Activated T-helper 1 cell treated with anti-CD3 and anti-CD28 coated beads, Interleukin-12 subunit alpha, Interleukin-12 subunit beta, Interleukin-2, Interleukin-4 antibody, amounts not matched to agents 30 ng/mL and 10 ng/mL and 1 ng/mL, durations not matched to agents 14 hours and 24 hours and 36 hours (primary cell): ENCODE measurements at regions of chr12 and their contacts with region 1.

Region 1: DNA sequence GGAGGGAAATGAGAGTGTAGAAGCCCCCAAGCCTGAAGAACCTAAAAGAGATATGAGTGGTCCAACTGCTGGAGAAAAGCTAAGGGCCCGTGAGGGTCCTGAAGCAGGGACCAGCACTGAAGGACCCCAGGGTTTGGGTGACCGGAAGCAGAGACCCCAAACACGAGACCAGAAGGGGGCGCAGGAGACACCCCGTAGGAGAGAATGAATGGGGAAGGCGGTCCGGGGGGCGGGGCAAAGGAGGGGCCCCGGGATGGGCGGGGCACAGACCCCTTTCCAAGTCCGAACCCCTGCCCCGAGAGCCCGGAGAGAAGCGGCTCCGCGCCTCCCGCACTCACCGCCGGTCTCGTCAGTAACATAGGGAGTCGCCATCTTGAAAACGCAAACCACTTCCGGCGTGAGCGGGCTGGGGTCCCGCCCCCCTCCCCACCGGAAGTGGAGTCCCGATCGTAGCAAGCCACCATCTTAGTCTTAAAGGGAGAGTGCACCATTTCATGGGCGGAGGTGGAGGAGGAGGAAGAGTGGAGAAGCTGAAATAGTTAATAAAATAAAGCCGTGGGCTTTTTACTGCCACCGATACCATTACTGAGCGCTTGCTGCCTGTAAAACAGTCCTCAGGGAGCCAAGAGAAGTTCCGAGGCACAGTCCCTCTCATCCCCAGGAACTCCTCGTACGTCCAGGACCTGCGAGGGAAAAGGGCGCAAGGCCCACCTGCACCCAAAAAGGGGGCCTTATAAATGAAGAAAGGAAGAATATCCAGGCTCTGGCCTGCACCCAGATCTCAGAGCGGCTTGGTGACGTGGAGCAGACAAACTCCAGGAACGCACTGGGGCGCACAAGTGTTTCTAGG is 731 bp downstream of the PYM1 start:
- DNase-seq: peak; percentile 85
- H3K4me3 Mint-ChIP-seq: peak overlapping the region; percentile 90
- H3K27ac Mint-ChIP-seq: peak overlapping the region; percentile 96
- H3K4me1 Mint-ChIP-seq: peaks cover 52% of the 10 kb centered on the region
- H3K27me3 Mint-ChIP-seq: no peaks in the 10 kb centered on the region

Region 2: DNA sequence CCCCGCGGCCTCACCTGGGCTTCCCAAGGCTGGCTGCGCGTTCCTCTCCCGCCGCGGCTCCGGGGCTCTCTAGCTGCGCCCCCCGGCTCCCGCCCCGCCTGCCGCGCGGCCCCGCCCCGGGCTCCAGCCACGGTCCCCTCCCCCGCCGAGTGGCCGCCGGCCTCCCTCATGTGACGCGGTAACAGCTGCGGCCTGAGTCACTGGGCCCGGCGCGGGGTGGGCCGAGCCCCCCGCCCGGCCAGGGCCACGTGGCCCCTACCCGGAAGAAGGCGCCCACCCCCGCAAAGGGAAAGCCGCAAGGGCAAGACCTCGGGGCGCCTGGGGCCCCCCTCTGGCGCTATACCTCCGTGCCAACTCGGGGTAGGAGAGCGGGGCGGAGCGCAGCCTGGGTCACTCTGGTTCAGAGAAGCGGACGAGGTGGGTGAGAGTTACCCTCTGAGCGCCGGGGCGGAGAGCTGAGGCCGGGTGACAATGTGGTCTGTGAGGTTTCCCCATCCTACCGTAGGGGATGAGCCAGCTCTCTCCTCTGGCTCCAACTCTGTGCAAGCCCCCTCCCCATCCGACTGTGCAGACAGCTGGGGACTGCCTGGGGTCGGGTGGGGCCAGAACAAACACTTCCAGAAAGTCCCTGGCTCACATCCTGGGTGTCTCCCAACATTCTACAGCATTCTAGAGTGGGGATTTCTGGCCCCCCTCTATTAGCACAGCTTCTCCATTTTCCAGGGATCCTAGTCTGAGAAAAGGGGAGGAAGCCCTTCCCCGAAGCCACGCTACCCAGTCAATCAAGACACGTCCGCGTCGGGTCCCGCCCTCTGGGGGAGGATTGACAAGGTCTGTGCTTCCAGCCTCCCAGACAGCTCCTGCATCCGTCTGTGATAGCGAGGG is 197.8 kb before region 1 on chr12 and contains the start of gene CD63:
- intact Hi-C with region 1: loop called (anchors 1 kb)
- DNase-seq: peak; percentile 50
- H3K4me3 Mint-ChIP-seq: peak within 1 kb of the TSS; percentile 90
- H3K27ac Mint-ChIP-seq: peak within 1 kb of the TSS; percentile 96
- H3K4me1 Mint-ChIP-seq: peaks cover 48% of the 10 kb centered on the region
- H3K27me3 Mint-ChIP-seq: peaks cover 1% of the 10 kb centered on the region
- total RNA-seq, gene CD63: 183 and 198 TPM in 2 replicates

Region 3: GRCh38 chr12:55829967-55830600 is 96.9 kb before region 1 on chr12:
- intact Hi-C with region 1: loop called (anchors 1 kb)
- DNase-seq: peak; percentile 22
- H3K4me3 Mint-ChIP-seq: peak overlapping the region; percentile 98
- H3K27ac Mint-ChIP-seq: peak overlapping the region; percentile 92
- H3K4me1 Mint-ChIP-seq: peaks cover 37% of the 10 kb centered on the region
- H3K27me3 Mint-ChIP-seq: no peaks in the 10 kb centered on the region

Region 4: DNA sequence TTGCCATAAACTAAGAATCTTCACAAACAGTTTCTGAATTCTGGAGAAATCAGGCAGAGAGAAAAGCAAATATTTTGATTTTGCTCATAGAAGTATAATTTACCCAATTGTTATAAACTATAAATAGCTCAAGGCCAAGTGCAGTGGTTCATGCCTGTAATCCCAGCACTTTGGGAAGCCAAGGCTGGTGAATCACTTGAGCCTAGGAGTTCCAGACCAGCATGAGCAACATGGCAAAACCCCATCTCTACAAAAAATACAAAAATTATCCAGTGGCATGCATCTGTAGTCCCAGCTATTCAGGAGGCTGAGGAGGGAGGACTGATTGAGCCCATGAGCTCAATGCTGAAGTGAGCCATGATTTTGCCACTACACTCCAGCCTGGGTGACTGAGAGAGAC is 64.7 kb before region 1 on chr12:
- intact Hi-C with region 1: no loop called
- DNase-seq: no peak
- H3K4me3 Mint-ChIP-seq: no peak overlapping the region
- H3K27ac Mint-ChIP-seq: no peak overlapping the region
- H3K4me1 Mint-ChIP-seq: no peaks in the 10 kb centered on the region
- H3K27me3 Mint-ChIP-seq: peaks cover 5% of the 10 kb centered on the region

Region 5: DNA sequence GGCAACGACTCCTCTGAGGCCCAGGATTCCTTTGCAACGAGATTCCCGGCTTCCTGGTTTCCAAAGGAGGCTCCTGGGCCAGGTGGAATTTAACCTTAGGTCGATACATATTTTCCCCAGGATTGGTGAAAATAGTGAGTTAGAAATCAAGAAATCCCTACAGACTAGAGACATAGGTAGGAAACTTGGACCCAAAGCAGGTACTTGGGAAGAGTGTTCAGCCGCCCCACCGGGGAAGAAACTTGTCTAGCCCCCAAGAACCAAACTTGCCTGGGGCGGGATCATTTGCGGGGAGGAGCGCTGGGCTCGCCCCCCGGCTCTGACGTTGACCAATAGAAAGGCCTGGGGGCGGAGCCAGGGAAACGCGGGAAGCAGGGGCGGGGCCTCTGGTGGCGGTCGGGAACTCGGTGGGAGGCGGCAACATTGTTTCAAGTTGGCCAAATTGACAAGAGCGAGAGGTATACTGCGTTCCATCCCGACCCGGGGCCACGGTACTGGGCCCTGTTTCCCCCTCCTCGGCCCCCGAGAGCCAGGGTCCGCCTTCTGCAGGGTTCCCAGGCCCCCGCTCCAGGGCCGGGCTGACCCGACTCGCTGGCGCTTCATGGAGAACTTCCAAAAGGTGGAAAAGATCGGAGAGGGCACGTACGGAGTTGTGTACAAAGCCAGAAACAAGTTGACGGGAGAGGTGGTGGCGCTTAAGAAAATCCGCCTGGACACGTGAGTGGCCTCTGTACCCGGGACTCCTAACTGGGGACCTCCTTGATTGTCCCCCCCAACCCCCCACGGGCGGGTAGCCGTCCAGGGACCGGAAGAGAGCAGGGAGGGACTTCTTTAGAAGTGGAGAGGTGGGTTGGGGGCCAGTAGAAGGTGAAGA is 39.7 kb after region 1 on chr12 and contains the start of gene CDK2:
- intact Hi-C with region 1: loop called (anchors 1 kb)
- DNase-seq: peak; percentile 89
- H3K4me3 Mint-ChIP-seq: peak within 1 kb of the TSS; percentile 98
- H3K27ac Mint-ChIP-seq: peak within 1 kb of the TSS; percentile 90
- H3K4me1 Mint-ChIP-seq: peaks cover 34% of the 10 kb centered on the region
- H3K27me3 Mint-ChIP-seq: no peaks in the 10 kb centered on the region
- total RNA-seq, gene CDK2: 93.5 and 109 TPM in 2 replicates

Region 6: DNA sequence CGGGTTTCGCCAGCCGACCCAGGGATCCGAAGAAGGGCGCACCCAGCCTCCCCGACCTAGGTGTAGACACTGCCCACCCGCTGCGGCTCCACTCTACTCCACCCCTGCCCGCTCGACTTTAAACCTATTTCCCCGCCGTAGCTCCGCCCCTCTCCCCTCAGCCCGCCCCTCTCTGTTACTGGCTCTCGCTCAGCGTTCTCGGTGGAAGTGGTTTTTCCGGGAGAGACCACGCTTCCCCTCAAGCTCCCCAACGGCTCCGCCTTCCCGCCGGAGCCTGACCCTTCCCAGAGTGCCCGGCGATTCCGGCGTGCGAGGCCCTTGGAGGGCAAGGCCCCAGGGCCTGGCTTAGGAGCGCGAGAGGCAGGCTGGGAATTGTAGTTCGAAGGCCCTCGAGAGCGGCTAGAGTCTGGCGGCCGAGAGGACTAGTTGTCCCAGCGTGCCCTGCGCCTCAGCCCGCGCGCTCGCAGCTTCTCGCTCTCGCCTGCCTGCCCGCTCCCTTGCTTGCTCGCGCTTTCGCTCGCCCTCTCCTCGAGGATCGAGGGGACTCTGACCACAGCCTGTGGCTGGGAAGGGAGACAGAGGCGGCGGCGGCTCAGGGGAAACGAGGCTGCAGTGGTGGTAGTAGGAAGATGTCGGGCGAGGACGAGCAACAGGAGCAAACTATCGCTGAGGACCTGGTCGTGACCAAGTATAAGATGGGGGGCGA is 177.3 kb after region 1 on chr12 and contains the start of gene PA2G4:
- intact Hi-C with region 1: loop called (anchors 1 kb)
- DNase-seq: peak; percentile 99
- H3K4me3 Mint-ChIP-seq: peak within 1 kb of the TSS; percentile 98
- H3K27ac Mint-ChIP-seq: peak within 1 kb of the TSS; percentile 89
- H3K4me1 Mint-ChIP-seq: peaks cover 49% of the 10 kb centered on the region
- H3K27me3 Mint-ChIP-seq: no peaks in the 10 kb centered on the region
- total RNA-seq, gene PA2G4: 404 and 419 TPM in 2 replicates

Region 7: GRCh38 chr12:57520053-57520871 is 1593.3 kb after region 1 on chr12 and contains the start of gene DDIT3:
- intact Hi-C with region 1: loop called (anchors 5 kb)
- DNase-seq: peak; percentile 99
- H3K4me3 Mint-ChIP-seq: peak within 1 kb of the TSS; percentile 97
- H3K27ac Mint-ChIP-seq: peak within 1 kb of the TSS; percentile 100
- H3K4me1 Mint-ChIP-seq: peaks cover 62% of the 10 kb centered on the region
- H3K27me3 Mint-ChIP-seq: no peaks in the 10 kb centered on the region
- total RNA-seq, gene DDIT3: 17.8 and 18.1 TPM in 2 replicates